ENCODE measurements at regions of chr20 and their contacts with region 1.

Region 1: DNA sequence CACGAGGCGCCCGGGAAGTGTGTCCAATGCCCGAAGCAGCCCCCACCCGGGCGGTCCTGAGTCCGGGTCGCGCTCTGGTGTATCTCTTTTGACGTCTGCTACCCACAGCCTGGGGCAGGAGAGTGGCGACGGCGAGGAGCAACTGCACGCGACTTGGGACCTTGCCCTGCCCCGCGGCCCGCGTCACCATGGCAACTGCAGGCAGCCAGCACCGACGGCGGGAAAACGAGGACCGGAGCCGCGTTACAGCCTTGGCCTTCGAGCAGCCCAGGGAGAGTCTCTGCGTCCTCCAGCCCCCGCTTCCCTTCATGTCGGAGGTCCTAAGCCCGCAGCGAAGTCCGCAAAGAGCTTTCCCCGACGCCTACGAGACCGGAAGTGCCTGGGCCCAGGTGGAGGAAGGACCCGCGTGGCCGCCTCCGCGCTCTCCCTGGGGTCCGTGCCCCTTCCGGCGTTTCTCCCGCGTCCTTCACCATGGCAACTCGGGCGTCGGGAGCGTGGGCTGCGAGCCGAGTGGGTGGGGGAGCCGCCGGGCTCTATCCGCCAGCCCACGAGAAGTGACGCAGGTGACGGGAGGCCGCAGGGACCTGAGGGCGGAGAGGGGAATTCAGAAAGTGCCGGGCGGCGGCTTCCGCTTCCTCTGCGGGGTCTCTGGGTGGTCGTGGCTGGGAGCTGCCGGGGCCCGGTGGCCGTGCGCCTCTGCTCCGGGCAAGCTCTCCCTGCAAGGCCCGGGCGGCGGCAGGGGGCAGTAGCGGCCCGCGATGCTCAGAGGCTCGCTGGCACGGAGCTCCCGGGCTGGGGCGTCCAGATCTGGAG is 88.6 kb upstream of the TGM3 start:
- DNase-seq: peak; percentile 82
- H3K4me3 Mint-ChIP-seq: peak overlapping the region; percentile 83
- H3K27ac Mint-ChIP-seq: no peak overlapping the region
- H3K4me1 Mint-ChIP-seq: no peaks in the 10 kb centered on the region
- H3K27me3 Mint-ChIP-seq: peaks cover 32% of the 10 kb centered on the region
- CTCF ChIP-seq: peak; percentile 64

Region 2: DNA sequence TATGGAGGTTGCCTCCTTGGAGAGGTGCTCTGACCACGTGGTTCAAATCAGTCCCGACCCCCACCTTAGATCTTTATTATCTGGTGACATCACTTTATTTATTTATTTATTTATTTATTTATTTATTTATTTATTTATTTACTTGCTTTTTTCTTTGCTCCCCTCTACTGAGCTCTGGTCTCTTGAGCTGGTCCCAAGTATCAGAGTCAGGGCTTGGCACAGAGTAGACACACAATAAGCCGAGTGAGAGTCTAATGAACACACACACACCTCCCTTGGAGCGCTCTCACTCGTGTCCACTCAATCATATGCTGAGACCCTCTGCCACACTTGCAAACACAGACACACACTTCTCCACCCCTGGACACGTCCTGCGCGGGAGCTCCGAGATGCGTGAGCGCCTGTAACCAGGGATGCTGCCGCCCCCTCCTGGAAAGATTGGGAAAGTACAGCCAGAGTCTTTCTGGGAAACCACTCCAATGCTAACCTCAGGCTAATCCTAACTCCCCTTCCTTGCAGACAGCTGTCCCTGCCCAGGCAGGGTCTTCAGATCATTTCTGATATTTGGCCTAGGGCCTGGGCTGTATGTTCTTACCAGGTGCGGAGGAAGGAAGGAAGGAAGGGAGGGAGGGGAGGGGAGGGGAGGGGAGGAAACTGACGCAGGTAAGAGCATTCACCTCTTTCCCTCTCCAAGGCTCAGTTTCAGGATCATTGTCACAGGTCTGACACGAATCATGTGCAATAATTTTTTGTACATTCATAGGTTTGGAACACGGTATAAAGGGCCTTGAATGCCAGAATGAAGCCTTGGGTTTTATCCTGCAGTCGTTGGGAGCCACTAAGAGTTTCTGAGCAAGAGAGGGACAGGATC is 34.6 kb before region 1 on chr20:
- CTCF ChIA-PET with region 1: no interaction called
- intact Hi-C with region 1: no loop called
- DNase-seq: peak; percentile 56
- H3K4me3 Mint-ChIP-seq: no peak overlapping the region
- H3K27ac Mint-ChIP-seq: no peak overlapping the region
- H3K4me1 Mint-ChIP-seq: no peaks in the 10 kb centered on the region
- H3K27me3 Mint-ChIP-seq: peaks cover 73% of the 10 kb centered on the region
- CTCF ChIP-seq: peak; percentile 70

Region 3: GRCh38 chr20:2237059-2237458 is 29.9 kb after region 1 on chr20:
- CTCF ChIA-PET with region 1: interaction called, 10 read pairs
- intact Hi-C with region 1: no loop called
- DNase-seq: peak; percentile 37
- H3K4me3 Mint-ChIP-seq: no peak overlapping the region
- H3K27ac Mint-ChIP-seq: no peak overlapping the region
- H3K4me1 Mint-ChIP-seq: peaks cover 11% of the 10 kb centered on the region
- H3K27me3 Mint-ChIP-seq: no peaks in the 10 kb centered on the region
- CTCF ChIP-seq: no peak

Region 4: DNA sequence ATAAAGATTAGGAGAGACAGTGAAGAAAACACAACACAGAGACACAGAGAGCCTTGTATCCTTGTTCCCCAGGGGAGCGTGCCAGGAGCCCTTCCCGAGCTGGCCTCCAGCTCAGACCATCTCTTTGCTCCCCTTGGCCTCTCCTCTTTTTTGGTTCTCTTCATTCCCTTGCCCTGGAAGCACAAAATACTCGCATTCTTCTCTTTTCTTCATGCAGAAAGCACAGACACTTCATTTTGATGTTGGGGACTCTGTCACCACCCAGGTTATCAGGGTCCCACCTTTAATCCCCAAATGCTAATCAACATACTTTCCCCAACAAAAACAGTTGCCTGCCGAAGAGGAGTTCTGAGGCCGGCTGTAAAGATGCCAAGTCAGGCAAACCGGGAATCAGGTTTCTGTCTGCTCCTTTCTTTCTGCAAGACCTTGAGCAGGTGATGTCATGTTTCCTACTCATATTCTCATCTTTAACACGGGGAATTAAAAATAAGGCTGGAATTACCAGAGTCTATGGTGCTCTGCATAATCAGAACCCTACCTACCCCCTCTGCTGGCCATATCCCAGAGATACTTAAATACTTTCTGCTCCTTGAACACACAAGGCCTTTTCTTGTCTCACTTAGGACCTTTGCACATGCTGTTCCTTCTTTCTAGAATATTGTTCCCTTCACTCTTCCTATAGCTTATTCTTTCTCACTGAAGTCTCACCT is 195.3 kb after region 1 on chr20:
- CTCF ChIA-PET with region 1: interaction called, 6 read pairs
- intact Hi-C with region 1: loop called (anchors 5 kb)
- DNase-seq: peak; percentile 16
- H3K4me3 Mint-ChIP-seq: no peak overlapping the region
- H3K27ac Mint-ChIP-seq: no peak overlapping the region
- H3K4me1 Mint-ChIP-seq: no peaks in the 10 kb centered on the region
- H3K27me3 Mint-ChIP-seq: peaks cover 29% of the 10 kb centered on the region
- CTCF ChIP-seq: no peak

Region 5: GRCh38 chr20:2451939-2452732 is 245.0 kb after region 1 on chr20:
- CTCF ChIA-PET with region 1: interaction called, 15 read pairs
- intact Hi-C with region 1: loop called (anchors 2 kb)
- DNase-seq: peak; percentile 79
- H3K4me3 Mint-ChIP-seq: no peak overlapping the region
- H3K27ac Mint-ChIP-seq: no peak overlapping the region
- H3K4me1 Mint-ChIP-seq: no peaks in the 10 kb centered on the region
- H3K27me3 Mint-ChIP-seq: peaks cover 26% of the 10 kb centered on the region
- CTCF ChIP-seq: peak; percentile 61

Measured in Calu3 (cell line).